HCT116 (cell line): ENCODE measurements at regions of chr2 and their contacts with region 1.

Region 1: GRCh38 chr2:162301151-162301804 is 17.2 kb downstream of the IFIH1 start:
- DNase-seq: peak; percentile 41
- ATAC-seq: peak; percentile 83
- H3K4me3 ChIP-seq: no peak overlapping the region
- H3K27ac ChIP-seq: no peak overlapping the region
- H3K4me1 ChIP-seq: no peaks in the 10 kb centered on the region
- H3K27me3 ChIP-seq: no peaks in the 10 kb centered on the region
- CTCF ChIP-seq: peak; percentile 64 to 91 (median 65); a peak in 5 of 6 replicates
- POLR2A ChIP-seq: no peak
- RAD21 ChIP-seq: peak; percentile 71

Region 2: GRCh38 chr2:162153608-162154224 is 147.6 kb before region 1 on chr2:
- CTCF ChIA-PET with region 1: interaction called, 119 read pairs
- POLR2A ChIA-PET with region 1: no interaction called
- RAD21 ChIA-PET with region 1: interaction called, 4 to 11 read pairs
- intact Hi-C with region 1: loop called (anchors 1 kb)
- DNase-seq: peak; percentile 52
- ATAC-seq: peak; percentile 97
- H3K4me3 ChIP-seq: no peak overlapping the region
- H3K27ac ChIP-seq: no peak overlapping the region
- H3K4me1 ChIP-seq: no peaks in the 10 kb centered on the region
- H3K27me3 ChIP-seq: no peaks in the 10 kb centered on the region
- CTCF ChIP-seq: peak; percentile 76 to 87 (median 82)
- POLR2A ChIP-seq: no peak
- RAD21 ChIP-seq: peak; percentile 76

Region 3: GRCh38 chr2:162915863-162916262 is 614.6 kb after region 1 on chr2:
- CTCF ChIA-PET with region 1: no interaction called
- POLR2A ChIA-PET with region 1: no interaction called
- RAD21 ChIA-PET with region 1: no interaction called
- intact Hi-C with region 1: no loop called
- DNase-seq: no peak
- ATAC-seq: no peak
- H3K4me3 ChIP-seq: no peak overlapping the region
- H3K27ac ChIP-seq: no peak overlapping the region
- H3K4me1 ChIP-seq: no peaks in the 10 kb centered on the region
- H3K27me3 ChIP-seq: no peaks in the 10 kb centered on the region
- CTCF ChIP-seq: no peak
- POLR2A ChIP-seq: no peak
- RAD21 ChIP-seq: no peak